HEK293 (cell line): ENCODE measurements at regions of chr3 and their contacts with region 1.

Region 1: GRCh38 chr3:107690522-107691138 is 167.9 kb downstream of the BBX start:
- H3K4me3 ChIP-seq: no peak overlapping the region
- H3K27ac ChIP-seq: no peak overlapping the region
- H3K4me1 ChIP-seq: no peaks in the 10 kb centered on the region
- CTCF ChIP-seq: no peak

Region 2: DNA sequence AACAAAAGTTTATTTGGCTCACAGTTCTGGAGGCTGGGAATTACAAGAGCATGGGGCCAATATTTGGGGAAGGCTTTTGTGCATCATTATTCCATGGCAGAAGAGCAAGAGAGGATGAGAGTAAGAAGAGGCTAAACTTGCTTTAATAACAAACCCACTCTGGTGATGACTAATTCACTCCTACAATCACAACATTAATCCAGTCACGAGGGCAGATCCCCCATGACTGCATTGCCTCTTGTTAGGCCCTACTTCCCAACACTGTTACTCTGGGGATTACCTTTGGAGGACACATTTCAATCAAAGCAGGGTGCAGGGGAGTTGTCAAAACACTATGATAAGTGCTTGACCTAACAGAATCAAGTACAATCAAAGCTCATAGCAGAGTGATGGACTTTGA is 13.8 kb after region 1 on chr3:
- CTCF ChIA-PET with region 1: interaction called, 12 read pairs
- POLR2A ChIA-PET with region 1: no interaction called
- H3K4me3 ChIP-seq: no peak overlapping the region
- H3K27ac ChIP-seq: no peak overlapping the region; the same call in 1 of the 2 replicates
- H3K4me1 ChIP-seq: peaks cover 13% of the 10 kb centered on the region
- CTCF ChIP-seq: no peak

Region 3: GRCh38 chr3:108053067-108053466 is 362.4 kb after region 1 on chr3:
- CTCF ChIA-PET with region 1: no interaction called
- POLR2A ChIA-PET with region 1: no interaction called
- H3K4me3 ChIP-seq: no peak overlapping the region
- H3K27ac ChIP-seq: no peak overlapping the region
- H3K4me1 ChIP-seq: no peaks in the 10 kb centered on the region
- CTCF ChIP-seq: no peak